A673 (cell line): ENCODE measurements at regions of chr3 and their contacts with region 1.

Region 1: DNA sequence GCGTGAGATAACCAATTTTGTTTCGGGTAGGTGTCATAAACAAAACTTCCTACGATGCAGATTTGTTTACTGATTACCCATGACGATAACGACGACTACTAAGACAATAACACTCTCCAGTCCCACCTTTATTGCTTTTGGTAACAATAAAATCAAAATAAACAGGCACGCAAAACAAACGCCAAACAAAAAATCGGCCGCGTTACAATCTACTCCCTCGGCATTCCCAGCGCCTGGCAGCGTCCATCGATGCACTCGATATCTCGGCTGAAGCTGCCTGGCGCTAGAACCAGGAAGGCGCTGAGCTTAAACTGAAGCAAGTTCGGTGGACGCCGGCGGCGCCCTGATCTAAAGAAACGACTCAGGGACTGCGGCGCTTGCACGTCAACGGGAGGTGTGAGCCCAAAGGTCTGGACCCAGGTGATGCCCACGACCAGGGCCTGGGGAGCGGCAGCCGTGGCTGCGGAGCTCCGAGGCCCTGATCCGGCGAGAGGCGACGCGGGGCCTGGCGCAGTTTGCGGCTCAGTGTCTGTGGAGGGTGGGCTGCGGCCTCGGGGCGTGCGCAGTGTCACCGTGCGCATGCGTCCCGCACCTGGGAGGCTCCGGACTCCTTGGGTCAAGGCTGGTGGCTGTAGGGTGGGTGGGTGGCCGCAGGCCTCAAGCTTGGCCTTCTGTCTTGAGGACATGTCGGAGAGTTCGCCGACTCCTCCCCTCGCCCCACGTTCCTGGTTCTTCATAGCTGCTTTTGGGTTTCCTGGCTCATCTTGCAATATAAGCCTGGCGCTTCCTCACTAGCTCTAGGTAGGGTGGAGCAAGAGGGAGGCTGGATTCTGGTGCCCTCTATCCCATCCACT is at the start of gene RSRC1:
- DNase-seq: peak; percentile 93
- H3K4me3 ChIP-seq: peak within 1 kb of the TSS; percentile 64
- H3K27ac ChIP-seq: peak within 1 kb of the TSS; percentile 87
- H3K4me1 ChIP-seq: peaks cover 2% of the 10 kb centered on the region
- H3K27me3 ChIP-seq: no peaks in the 10 kb centered on the region
- CTCF ChIP-seq: no peak
- total RNA-seq, gene RSRC1: 59.4 and 65.4 TPM in 2 replicates

Region 2: GRCh38 chr3:158121295-158121694 is 11.3 kb after region 1 on chr3:
- CTCF ChIA-PET with region 1: no interaction called
- POLR2A ChIA-PET with region 1: no interaction called
- intact Hi-C with region 1: loop called (anchors 1 kb)
- DNase-seq: no peak
- H3K4me3 ChIP-seq: no peak overlapping the region
- H3K27ac ChIP-seq: no peak overlapping the region
- H3K4me1 ChIP-seq: no peaks in the 10 kb centered on the region
- H3K27me3 ChIP-seq: no peaks in the 10 kb centered on the region
- CTCF ChIP-seq: no peak

Region 3: DNA sequence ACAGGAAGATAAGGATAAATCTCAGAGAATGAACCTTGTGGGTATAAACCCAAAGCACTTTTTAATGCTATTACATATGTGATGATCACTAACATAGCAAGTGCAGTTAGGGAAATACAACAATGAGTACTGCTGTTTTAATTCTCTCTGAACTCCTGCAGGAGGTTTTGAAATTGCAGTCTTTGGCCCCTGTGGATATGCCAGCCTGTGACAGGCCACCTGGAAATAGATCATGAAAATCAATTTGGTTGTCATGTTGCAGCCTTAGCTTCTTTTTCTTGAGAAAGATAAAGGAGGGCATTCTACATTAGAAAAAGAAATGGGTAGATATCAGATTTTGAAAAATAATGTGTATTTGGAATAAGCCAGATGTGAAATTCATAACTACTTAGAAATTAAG is 103.4 kb after region 1 on chr3:
- CTCF ChIA-PET with region 1: no interaction called
- POLR2A ChIA-PET with region 1: interaction called, 22 read pairs
- intact Hi-C with region 1: no loop called
- DNase-seq: no peak
- H3K4me3 ChIP-seq: no peak overlapping the region
- H3K27ac ChIP-seq: no peak overlapping the region
- H3K4me1 ChIP-seq: peaks cover 6% of the 10 kb centered on the region
- H3K27me3 ChIP-seq: no peaks in the 10 kb centered on the region
- CTCF ChIP-seq: no peak

Region 4: DNA sequence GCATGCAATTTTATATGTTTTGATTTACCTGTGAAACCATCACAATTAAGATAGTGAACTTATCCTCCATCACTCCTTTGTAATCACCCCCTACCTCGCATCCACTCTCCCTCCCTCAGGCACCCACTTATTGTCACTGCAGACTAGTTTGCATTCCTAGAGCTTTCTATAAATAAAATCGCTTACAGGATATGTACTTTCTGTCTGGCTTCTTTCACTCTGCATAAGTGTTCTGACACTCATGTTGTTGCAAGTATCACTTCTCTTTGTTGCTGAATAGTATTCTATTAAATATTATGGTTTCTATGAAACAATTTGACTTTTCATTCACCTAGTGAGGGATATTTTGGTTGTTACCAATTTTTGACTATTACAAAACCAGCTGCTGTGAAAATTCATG is 139.2 kb after region 1 on chr3:
- CTCF ChIA-PET with region 1: no interaction called
- POLR2A ChIA-PET with region 1: no interaction called
- intact Hi-C with region 1: no loop called
- DNase-seq: no peak
- H3K4me3 ChIP-seq: no peak overlapping the region
- H3K27ac ChIP-seq: no peak overlapping the region
- H3K4me1 ChIP-seq: no peaks in the 10 kb centered on the region
- H3K27me3 ChIP-seq: no peaks in the 10 kb centered on the region
- CTCF ChIP-seq: no peak

Region 5: DNA sequence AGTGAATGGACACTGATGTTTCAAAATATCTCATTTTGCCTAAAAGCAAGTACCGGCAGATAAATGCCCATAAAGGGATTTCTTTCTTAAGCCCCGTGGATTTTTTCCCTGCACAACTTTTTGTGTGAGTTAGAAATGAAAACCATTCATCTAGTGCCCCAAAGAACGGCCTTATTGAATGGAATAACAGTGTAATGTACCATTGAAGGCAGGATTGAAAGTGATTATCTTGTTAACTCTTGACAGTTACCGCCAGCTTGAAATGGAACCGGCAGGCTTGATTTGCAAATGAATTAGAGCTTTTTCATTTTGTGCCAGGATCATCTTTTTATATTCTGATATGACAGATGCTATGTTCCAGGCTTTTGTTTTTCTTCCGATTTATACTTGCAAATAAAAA is 162.1 kb after region 1 on chr3:
- CTCF ChIA-PET with region 1: no interaction called
- POLR2A ChIA-PET with region 1: no interaction called
- intact Hi-C with region 1: loop called (anchors 5 kb)
- DNase-seq: peak; percentile 65
- H3K4me3 ChIP-seq: no peak overlapping the region
- H3K27ac ChIP-seq: no peak overlapping the region
- H3K4me1 ChIP-seq: peaks cover 32% of the 10 kb centered on the region
- H3K27me3 ChIP-seq: no peaks in the 10 kb centered on the region
- CTCF ChIP-seq: no peak

Region 6: GRCh38 chr3:158434412-158435038 is 324.5 kb after region 1 on chr3:
- CTCF ChIA-PET with region 1: no interaction called
- POLR2A ChIA-PET with region 1: no interaction called
- intact Hi-C with region 1: loop called (anchors 5 kb)
- DNase-seq: peak; percentile 80
- H3K4me3 ChIP-seq: no peak overlapping the region
- H3K27ac ChIP-seq: no peak overlapping the region
- H3K4me1 ChIP-seq: peaks cover 11% of the 10 kb centered on the region
- H3K27me3 ChIP-seq: no peaks in the 10 kb centered on the region
- CTCF ChIP-seq: peak; percentile 82

Region 7: GRCh38 chr3:158465074-158465473 is 355.0 kb after region 1 on chr3:
- CTCF ChIA-PET with region 1: no interaction called
- POLR2A ChIA-PET with region 1: interaction called, 11 read pairs
- intact Hi-C with region 1: no loop called
- DNase-seq: no peak
- H3K4me3 ChIP-seq: no peak overlapping the region
- H3K27ac ChIP-seq: no peak overlapping the region
- H3K4me1 ChIP-seq: peaks cover 10% of the 10 kb centered on the region
- H3K27me3 ChIP-seq: no peaks in the 10 kb centered on the region
- CTCF ChIP-seq: no peak